ENCODE measurements at regions of chr2 and their contacts with region 1.

Region 1: GRCh38 chr2:233480490-233481202 is 85.9 kb downstream of the USP40 start:
- DNase-seq: no peak
- ATAC-seq: 0 out of 2 replicates have a peak, but pooled peaks have one; percentile 13
- H3K4me3 ChIP-seq: no peak overlapping the region
- H3K27ac ChIP-seq: no peak overlapping the region
- H3K4me1 ChIP-seq: no peaks in the 10 kb centered on the region
- H3K27me3 ChIP-seq: no peaks in the 10 kb centered on the region
- CTCF ChIP-seq: no peak
- POLR2A ChIP-seq: no peak
- RAD21 ChIP-seq: 0 out of 2 replicates have a peak, but pooled peaks have one; percentile 17

Region 2: GRCh38 chr2:233832869-233833311 is 352.2 kb after region 1 on chr2:
- CTCF ChIA-PET with region 1: no interaction called
- POLR2A ChIA-PET with region 1: no interaction called
- RAD21 ChIA-PET with region 1: no interaction called
- intact Hi-C with region 1: loop called (anchors 10 kb)
- DNase-seq: peak; percentile 7
- ATAC-seq: peak; percentile 71
- H3K4me3 ChIP-seq: no peak overlapping the region
- H3K27ac ChIP-seq: no peak overlapping the region
- H3K4me1 ChIP-seq: no peaks in the 10 kb centered on the region
- H3K27me3 ChIP-seq: no peaks in the 10 kb centered on the region
- CTCF ChIP-seq: peak in 1 of 3 experiments; percentile 31; a peak in 2 of 6 replicates
- POLR2A ChIP-seq: no peak
- RAD21 ChIP-seq: peak; percentile 58